GM10248 (cell line): ENCODE measurements at regions of chr15 and their contacts with region 1.

Region 1: DNA sequence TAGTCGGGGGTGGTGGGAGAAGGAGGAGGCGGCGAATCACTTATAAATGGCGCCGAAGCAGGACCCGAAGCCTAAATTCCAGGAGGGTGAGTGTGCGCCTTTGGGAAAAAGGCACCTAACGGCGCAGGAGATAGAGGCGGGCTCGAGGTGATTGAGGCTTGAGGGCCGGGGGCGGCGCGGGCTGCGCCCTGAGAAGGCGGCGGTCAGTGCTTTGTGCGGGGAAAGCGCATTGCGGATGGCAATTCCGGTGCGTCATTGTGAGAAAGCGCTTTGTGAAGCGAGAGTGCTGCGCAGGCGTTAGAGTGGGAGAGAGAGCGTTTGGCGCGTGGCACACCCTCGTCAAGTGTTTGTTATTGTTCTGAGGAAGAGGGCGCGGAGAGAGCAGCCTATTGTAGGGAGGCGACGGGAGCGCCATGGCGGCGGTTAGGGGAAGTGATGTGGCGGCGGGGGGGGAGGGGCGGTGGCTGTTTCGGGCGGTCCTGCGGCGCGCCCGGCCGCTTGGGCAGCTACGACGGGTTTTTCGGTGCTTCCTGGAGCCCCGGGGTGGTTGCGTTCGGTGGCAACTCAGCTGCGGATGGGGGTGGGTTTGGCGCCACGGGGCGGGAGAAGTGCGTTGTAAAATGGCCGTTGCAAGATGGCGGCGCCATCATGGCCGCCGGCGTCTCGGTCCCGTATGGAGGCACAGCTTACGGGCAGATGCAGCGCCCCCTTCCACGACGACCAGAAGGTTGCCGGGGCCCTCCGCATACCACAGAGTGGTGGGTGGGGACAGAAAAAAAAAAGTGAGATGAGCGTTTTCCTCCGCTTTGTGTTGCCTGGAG is 492 bp downstream of the MORF4L1 start:
- DNase-seq: peak; percentile 86
- CTCF ChIP-seq: peak; percentile 68

Region 2: DNA sequence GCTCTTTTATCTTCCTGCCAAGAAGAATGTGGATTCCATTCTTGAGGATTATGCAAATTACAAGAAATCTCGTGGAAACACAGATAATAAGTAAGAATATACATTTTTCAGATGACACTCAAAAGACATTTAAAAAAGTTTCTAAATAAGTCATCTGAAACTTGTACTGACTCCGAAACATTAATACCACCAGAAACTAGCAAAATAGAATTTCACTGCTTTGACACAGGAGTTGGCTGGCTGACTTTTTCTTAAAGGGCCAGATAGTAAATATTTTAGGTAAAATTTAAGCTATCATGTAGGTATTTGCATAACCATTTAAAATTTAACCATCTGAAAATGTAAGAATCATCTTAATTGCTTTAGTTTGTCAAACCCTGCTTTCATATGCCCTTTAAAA is 20.4 kb after region 1 on chr15:
- CTCF ChIA-PET with region 1: interaction called, 21 read pairs
- POLR2A ChIA-PET with region 1: interaction called, 3 read pairs
- DNase-seq: no peak
- CTCF ChIP-seq: no peak